CD8-positive, alpha-beta T cell (primary cell): ENCODE measurements at regions of chr11 and their contacts with region 1.

Region 1: DNA sequence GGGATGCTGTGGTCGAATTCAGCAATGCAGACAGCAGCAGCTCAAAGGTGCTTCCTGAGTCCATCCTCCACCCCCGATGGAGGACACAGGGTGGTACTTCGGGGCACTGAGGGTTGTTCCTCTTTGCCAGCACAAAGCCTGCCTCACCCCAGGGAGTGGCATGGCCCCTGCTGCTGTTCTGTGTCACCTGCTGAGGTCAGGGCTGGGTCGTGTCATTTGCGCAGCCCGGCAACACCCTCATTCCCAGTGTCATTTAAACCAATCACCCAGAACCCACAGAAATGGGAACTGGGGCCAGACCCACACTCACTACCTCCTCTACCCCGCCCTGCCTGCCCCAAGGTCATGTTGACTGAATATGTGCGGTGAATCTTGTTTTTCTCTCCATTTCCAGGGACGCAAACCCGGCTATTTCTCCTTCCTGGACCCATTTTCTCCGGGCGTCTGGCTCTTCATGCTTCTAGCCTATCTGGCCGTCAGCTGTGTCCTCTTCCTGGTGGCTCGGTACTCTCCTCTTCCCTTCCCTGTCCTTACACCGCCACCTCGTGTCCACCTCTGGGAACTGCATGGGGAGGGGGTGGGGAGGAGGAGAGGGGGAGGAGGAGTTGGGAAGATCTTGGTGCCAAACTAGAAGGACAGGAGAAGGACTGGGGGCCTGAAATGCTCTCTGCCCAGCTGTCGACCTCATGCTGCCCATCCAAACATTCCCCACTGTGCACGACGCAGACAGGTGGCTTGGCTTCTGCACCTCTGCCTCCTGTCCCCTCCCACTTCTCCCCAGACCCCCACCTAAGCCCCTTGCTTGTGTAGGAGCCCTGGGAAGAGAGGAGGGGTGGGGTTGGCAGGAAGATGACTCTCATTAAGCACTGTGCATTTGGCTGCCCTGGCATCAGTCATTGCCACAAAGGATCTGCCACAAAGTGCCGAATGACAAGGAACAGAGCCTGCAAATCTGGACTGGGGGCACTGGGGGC is 71.2 kb upstream of the TBCEL start:
- DNase-seq: peak; percentile 25 to 75 (median 58)
- ATAC-seq: peak; percentile 56
- H3K4me3 ChIP-seq: peak overlapping the region in 1 of 2 experiments; percentile 39
- H3K4me3 Mint-ChIP-seq: peak overlapping the region; percentile 66
- H3K27ac ChIP-seq: no peak overlapping the region
- H3K27ac Mint-ChIP-seq: no peak overlapping the region
- H3K4me1 ChIP-seq: peaks cover 21% of the 10 kb centered on the region
- H3K4me1 Mint-ChIP-seq: peaks cover 16% of the 10 kb centered on the region
- H3K27me3 ChIP-seq: peaks cover 0 to 5% of the 10 kb centered on the region in 2 experiments
- H3K27me3 Mint-ChIP-seq: peaks cover 23% of the 10 kb centered on the region
- CTCF ChIP-seq: peak; percentile 34

Region 2: DNA sequence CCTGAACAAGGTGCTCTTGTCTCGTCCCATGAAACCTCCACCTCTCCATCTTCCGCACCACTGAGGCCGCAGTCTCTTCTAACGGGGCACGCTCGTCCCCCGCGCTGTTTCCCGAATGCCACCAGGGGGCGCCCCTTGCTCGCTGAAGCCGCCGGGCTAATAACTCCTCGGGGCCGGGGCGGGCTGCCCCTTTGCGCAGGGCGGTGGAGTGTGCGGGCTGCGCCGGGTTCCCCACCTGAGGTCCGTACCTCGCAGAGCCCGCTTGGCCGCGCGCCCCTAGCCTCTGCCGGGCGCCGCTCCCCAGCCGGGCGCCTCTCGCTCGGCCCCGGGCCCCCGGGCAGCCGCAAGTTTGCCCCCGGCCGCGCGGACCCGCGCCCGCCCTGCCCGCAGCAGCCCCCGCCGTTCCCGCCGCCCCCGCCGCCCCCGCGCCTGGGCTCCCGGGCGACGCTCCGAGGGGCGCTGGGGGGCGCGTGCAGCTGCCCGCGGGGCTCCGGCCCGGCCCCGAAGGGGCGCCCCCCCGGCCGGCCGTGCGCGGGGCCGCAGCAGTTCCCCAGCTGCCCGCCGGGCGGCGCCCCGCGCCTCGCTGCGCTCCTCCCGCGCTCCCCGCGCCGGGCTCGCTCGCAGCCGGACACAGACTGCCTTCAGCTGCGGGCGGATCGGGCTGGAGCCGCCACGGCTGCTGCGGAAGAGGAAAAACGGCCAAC is 441.5 kb before region 1 on chr11 and contains the start of gene GRIK4:
- CTCF ChIA-PET with region 1: no interaction called
- POLR2A ChIA-PET with region 1: no interaction called
- intact Hi-C with region 1: loop called (anchors 2 to 5 kb)
- DNase-seq: peak; percentile 47 to 81 (median 73)
- ATAC-seq: peak; percentile 73
- H3K4me3 ChIP-seq: no peak within 1 kb of the TSS
- H3K4me3 Mint-ChIP-seq: peak within 1 kb of the TSS; percentile 62
- H3K27ac ChIP-seq: no peak within 1 kb of the TSS
- H3K27ac Mint-ChIP-seq: no peak within 1 kb of the TSS
- H3K4me1 ChIP-seq: no peaks in the 10 kb centered on the region
- H3K4me1 Mint-ChIP-seq: peaks cover 5% of the 10 kb centered on the region
- H3K27me3 ChIP-seq: peaks cover 6% of the 10 kb centered on the region in 2 experiments
- H3K27me3 Mint-ChIP-seq: peaks cover 74% of the 10 kb centered on the region
- CTCF ChIP-seq: peak; percentile 71
- total RNA-seq, gene GRIK4: not detected

Region 3: DNA sequence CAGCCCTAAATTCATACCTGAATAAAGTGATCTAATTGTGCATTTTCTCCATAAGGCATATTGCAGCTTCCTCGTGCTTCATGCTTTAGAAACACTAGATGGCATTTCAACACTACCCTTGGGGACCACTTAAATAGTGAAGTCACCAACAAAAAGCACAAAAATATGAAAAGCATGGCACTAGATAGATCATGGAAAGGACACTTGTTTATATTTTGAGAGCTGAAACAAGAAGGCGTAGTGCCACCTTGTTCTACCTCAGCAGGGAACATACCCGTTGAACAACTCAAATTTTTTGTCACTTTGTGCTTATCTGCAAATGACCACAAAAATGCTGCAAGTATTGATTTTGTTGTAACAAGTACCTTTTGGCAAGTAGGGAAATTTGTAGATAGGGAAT is 79.8 kb after region 1 on chr11:
- CTCF ChIA-PET with region 1: no interaction called
- POLR2A ChIA-PET with region 1: no interaction called
- intact Hi-C with region 1: no loop called
- DNase-seq: no peak
- ATAC-seq: no peak
- H3K4me3 ChIP-seq: no peak overlapping the region
- H3K4me3 Mint-ChIP-seq: no peak overlapping the region
- H3K27ac ChIP-seq: no peak overlapping the region
- H3K27ac Mint-ChIP-seq: no peak overlapping the region
- H3K4me1 ChIP-seq: no peaks in the 10 kb centered on the region
- H3K4me1 Mint-ChIP-seq: peaks cover 28% of the 10 kb centered on the region
- H3K27me3 ChIP-seq: no peaks in the 10 kb centered on the region
- H3K27me3 Mint-ChIP-seq: no peaks in the 10 kb centered on the region
- CTCF ChIP-seq: no peak

Region 4: DNA sequence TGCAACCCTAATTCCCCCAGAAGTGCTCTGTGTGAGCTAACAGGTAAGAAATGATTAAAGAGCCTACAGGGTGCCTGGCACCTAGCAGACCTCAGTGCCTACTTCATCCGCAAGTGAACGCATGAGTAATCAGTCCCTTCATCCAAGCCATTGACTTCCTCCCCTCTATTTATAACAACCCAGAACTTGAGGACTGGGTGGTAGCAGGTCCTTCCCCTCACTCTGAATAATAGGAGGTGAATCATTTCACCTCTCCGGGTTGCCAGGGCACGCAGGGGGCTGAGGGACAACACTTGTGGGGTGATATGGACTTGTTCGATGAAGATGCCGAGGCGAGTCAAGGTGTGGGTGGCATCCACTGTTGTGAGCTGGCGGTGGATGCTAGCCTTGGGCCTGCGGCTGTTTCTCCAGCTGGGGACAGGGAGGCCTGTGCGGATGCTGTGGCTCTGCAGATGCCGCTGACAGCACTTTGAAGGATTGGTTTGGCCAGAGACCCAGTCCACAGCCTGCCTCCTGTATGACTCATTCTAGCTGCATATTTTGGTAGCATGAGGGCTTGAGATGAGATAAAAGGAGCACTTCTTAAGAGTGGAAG is 511.7 kb after region 1 on chr11:
- CTCF ChIA-PET with region 1: no interaction called
- POLR2A ChIA-PET with region 1: no interaction called
- intact Hi-C with region 1: no loop called
- DNase-seq: peak in 8 of 9 experiments; percentile 60 to 85 (median 80)
- ATAC-seq: peak; percentile 71
- H3K4me3 ChIP-seq: peak overlapping the region; percentile 4 to 5
- H3K4me3 Mint-ChIP-seq: peak overlapping the region; percentile 59
- H3K27ac ChIP-seq: peak overlapping the region; percentile 35 to 68
- H3K27ac Mint-ChIP-seq: peak overlapping the region; percentile 97
- H3K4me1 ChIP-seq: peaks cover 99% of the 10 kb centered on the region
- H3K4me1 Mint-ChIP-seq: peaks cover 95% of the 10 kb centered on the region
- H3K27me3 ChIP-seq: no peaks in the 10 kb centered on the region
- H3K27me3 Mint-ChIP-seq: no peaks in the 10 kb centered on the region
- CTCF ChIP-seq: no peak